CD14-positive monocyte (primary cell): ENCODE measurements at regions of chr1 and their contacts with region 1.

Region 1: GRCh38 chr1:17661546-17662157 is 93.5 kb upstream of the ACTL8 start:
- DNase-seq: peak; percentile 39 to 56 (median 49)
- H3K4me3 ChIP-seq: no peak overlapping the region
- H3K4me3 Mint-ChIP-seq: no peak overlapping the region
- H3K27ac ChIP-seq: no peak overlapping the region
- H3K27ac Mint-ChIP-seq: no peak overlapping the region
- H3K4me1 ChIP-seq: peaks cover 14 to 19% of the 10 kb centered on the region in 2 donors
- H3K4me1 Mint-ChIP-seq: peaks cover 20% of the 10 kb centered on the region
- H3K27me3 ChIP-seq: no peaks in the 10 kb centered on the region
- H3K27me3 Mint-ChIP-seq: peaks cover 0 to 3% (median 0%) of the 10 kb centered on the region in 3 donors
- CTCF ChIP-seq: peak; percentile 88

Region 2: GRCh38 chr1:17551755-17552234 is 109.9 kb before region 1 on chr1:
- intact Hi-C with region 1: no loop called
- DNase-seq: peak in 1 of 3 donors; percentile 10
- H3K4me3 ChIP-seq: no peak overlapping the region
- H3K4me3 Mint-ChIP-seq: no peak overlapping the region
- H3K27ac ChIP-seq: no peak overlapping the region
- H3K27ac Mint-ChIP-seq: no peak overlapping the region
- H3K4me1 ChIP-seq: no peaks in the 10 kb centered on the region
- H3K4me1 Mint-ChIP-seq: peaks cover 3% of the 10 kb centered on the region
- H3K27me3 ChIP-seq: no peaks in the 10 kb centered on the region
- H3K27me3 Mint-ChIP-seq: peaks cover 12 to 25% (median 15%) of the 10 kb centered on the region in 3 donors
- CTCF ChIP-seq: no peak

Region 3: DNA sequence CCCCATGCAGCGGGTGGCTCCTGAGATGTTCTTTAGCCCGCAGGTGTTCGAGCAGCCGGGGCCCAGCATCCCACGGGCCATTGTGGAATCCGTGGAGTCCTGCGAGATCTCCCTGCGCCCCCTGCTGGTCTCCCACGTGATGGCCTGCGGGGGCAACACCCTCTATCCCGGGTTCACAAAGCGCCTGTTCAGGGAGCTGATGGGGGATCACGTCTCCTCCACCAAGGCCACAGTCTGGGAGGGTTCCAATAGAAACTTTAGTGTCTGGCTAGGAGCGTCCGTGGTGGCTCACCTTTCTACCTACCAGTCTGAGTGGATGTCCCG is 164.5 kb after region 1 on chr1:
- intact Hi-C with region 1: loop called (anchors 5 to 10 kb)
- DNase-seq: peak; percentile 1 to 28 (median 6)
- H3K4me3 ChIP-seq: no peak overlapping the region
- H3K4me3 Mint-ChIP-seq: no peak overlapping the region
- H3K27ac ChIP-seq: no peak overlapping the region
- H3K27ac Mint-ChIP-seq: no peak overlapping the region
- H3K4me1 ChIP-seq: no peaks in the 10 kb centered on the region
- H3K4me1 Mint-ChIP-seq: no peaks in the 10 kb centered on the region
- H3K27me3 ChIP-seq: no peaks in the 10 kb centered on the region
- H3K27me3 Mint-ChIP-seq: peaks cover 9 to 26% (median 11%) of the 10 kb centered on the region in 3 donors
- CTCF ChIP-seq: peak; percentile 62

Region 4: GRCh38 chr1:18100491-18101063 is 438.9 kb after region 1 on chr1:
- intact Hi-C with region 1: loop called in 1 of 2 experiments (anchors 5 kb)
- DNase-seq: peak; percentile 25 to 38 (median 38)
- H3K4me3 ChIP-seq: no peak overlapping the region
- H3K4me3 Mint-ChIP-seq: no peak overlapping the region
- H3K27ac ChIP-seq: no peak overlapping the region
- H3K27ac Mint-ChIP-seq: no peak overlapping the region
- H3K4me1 ChIP-seq: no peaks in the 10 kb centered on the region
- H3K4me1 Mint-ChIP-seq: no peaks in the 10 kb centered on the region
- H3K27me3 ChIP-seq: peaks cover 0 to 7% of the 10 kb centered on the region in 2 donors
- H3K27me3 Mint-ChIP-seq: peaks cover 14 to 22% (median 14%) of the 10 kb centered on the region in 3 donors
- CTCF ChIP-seq: peak; percentile 83